ENCODE measurements at regions of chr12 and their contacts with region 1.

Region 1: GRCh38 chr12:104456417-104456949 is at the start of gene CHST11:
- DNase-seq: peak; percentile 86 to 94 (median 93)
- ATAC-seq: peak; percentile 96
- H3K4me3 ChIP-seq: peak within 1 kb of the TSS; percentile 70
- H3K27ac ChIP-seq: peak within 1 kb of the TSS; percentile 46
- H3K4me1 ChIP-seq: peaks cover 3% of the 10 kb centered on the region
- H3K27me3 ChIP-seq: no peaks in the 10 kb centered on the region
- total RNA-seq, gene CHST11: 7.2 to 11.8 (median 10.5) TPM

Region 2: GRCh38 chr12:104381731-104382480 is 74.6 kb before region 1 on chr12:
- intact Hi-C with region 1: loop called in 1 of 4 experiments (anchors 5 kb)
- DNase-seq: peak; percentile 71 to 89 (median 86)
- ATAC-seq: peak; percentile 81 to 88
- H3K4me3 ChIP-seq: no peak overlapping the region
- H3K27ac ChIP-seq: no peak overlapping the region
- H3K4me1 ChIP-seq: peaks cover 3% of the 10 kb centered on the region
- H3K27me3 ChIP-seq: no peaks in the 10 kb centered on the region

Region 3: GRCh38 chr12:104603545-104603973 is 147.1 kb after region 1 on chr12:
- intact Hi-C with region 1: loop called in 1 of 4 experiments (anchors 2 kb)
- DNase-seq: no peak
- ATAC-seq: no peak
- H3K4me3 ChIP-seq: no peak overlapping the region
- H3K27ac ChIP-seq: peak overlapping the region; percentile 77
- H3K4me1 ChIP-seq: peaks cover 7% of the 10 kb centered on the region
- H3K27me3 ChIP-seq: no peaks in the 10 kb centered on the region

Region 4: GRCh38 chr12:104671407-104672098 is 215.1 kb after region 1 on chr12:
- intact Hi-C with region 1: loop called in 1 of 4 experiments (anchors 5 kb)
- DNase-seq: peak; percentile 87 to 91 (median 90)
- ATAC-seq: peak; percentile 32 to 67
- H3K4me3 ChIP-seq: no peak overlapping the region
- H3K27ac ChIP-seq: peak overlapping the region; percentile 88
- H3K4me1 ChIP-seq: peaks cover 32% of the 10 kb centered on the region
- H3K27me3 ChIP-seq: no peaks in the 10 kb centered on the region

Region 5: DNA sequence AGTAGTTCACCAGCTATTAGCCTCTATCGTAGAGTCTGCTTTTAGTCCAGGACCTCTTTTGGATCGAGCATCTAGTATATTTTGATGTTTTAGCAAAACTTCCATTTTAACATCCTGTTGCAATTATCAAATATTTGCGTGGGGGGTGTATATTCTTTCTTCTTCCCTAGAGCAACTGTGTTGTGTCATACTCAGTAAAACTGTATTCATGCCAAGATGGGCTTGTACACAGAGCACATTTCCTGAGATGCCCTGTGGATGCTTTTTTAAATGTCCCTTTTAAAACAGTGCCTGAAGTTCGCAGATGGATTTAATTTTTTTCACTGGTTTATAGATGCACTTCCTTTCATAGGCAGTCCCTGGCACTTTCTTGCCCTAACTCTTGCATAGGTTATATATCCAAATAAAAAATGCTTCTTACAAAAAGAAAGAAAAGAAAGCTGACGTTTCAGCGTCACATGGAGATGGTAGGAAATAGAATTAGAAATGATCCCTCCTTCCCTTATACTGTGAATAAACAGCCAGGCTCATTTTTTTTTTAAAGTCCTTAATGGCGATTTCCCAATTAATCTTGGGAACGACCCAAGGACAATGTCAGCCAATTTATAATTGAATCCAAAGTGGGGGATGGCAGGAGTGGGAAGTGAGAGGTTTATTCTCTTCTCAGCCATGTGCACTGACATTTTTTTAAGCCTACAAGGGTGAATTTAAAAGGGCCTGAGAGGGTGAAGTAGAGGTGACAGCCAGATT is 254.6 kb after region 1 on chr12:
- intact Hi-C with region 1: no loop called
- DNase-seq: no peak
- ATAC-seq: peak; percentile 45 to 62
- H3K4me3 ChIP-seq: no peak overlapping the region
- H3K27ac ChIP-seq: no peak overlapping the region
- H3K4me1 ChIP-seq: peaks cover 7% of the 10 kb centered on the region
- H3K27me3 ChIP-seq: no peaks in the 10 kb centered on the region

Region 6: GRCh38 chr12:104877123-104877705 is 420.7 kb after region 1 on chr12:
- intact Hi-C with region 1: loop called in 1 of 4 experiments (anchors 10 kb)
- DNase-seq: peak; percentile 22 to 74 (median 49)
- ATAC-seq: peak; percentile 63 to 80
- H3K4me3 ChIP-seq: no peak overlapping the region
- H3K27ac ChIP-seq: no peak overlapping the region
- H3K4me1 ChIP-seq: no peaks in the 10 kb centered on the region
- H3K27me3 ChIP-seq: no peaks in the 10 kb centered on the region

Measured in right cardiac atrium (tissue), 5 donors.